ENCODE measurements at regions of chr1 and their contacts with region 1.

Region 1: DNA sequence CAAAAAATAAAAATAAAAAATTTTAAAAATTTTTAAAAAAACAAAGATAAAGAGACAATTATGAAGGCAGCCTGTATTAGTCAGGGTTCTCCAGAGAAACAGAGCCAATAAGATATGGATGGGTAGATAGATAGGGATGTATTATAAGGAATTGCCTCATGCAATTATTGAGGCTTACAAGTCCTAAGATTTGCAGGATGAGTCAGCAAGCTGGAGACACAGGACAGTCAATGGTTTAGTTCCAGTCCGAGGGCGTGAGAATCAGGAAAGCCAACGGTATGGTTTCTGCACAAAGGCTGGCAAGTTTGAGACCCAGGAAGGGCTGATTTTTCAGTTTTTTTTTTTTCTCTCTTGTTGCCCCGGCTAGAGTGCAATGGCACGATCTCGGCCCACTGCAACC is 24.1 kb upstream of the EIF4G3 start:
- DNase-seq: no peak
- H3K4me3 ChIP-seq: no peak overlapping the region
- H3K4me3 Mint-ChIP-seq: no peak overlapping the region
- H3K27ac ChIP-seq: no peak overlapping the region
- H3K27ac Mint-ChIP-seq: no peak overlapping the region
- H3K4me1 ChIP-seq: no peaks in the 10 kb centered on the region
- H3K4me1 Mint-ChIP-seq: no peaks in the 10 kb centered on the region
- H3K27me3 ChIP-seq: no peaks in the 10 kb centered on the region
- H3K27me3 Mint-ChIP-seq: peaks cover 0 to 8% (median 8%) of the 10 kb centered on the region in 3 donors
- CTCF ChIP-seq: no peak

Region 2: DNA sequence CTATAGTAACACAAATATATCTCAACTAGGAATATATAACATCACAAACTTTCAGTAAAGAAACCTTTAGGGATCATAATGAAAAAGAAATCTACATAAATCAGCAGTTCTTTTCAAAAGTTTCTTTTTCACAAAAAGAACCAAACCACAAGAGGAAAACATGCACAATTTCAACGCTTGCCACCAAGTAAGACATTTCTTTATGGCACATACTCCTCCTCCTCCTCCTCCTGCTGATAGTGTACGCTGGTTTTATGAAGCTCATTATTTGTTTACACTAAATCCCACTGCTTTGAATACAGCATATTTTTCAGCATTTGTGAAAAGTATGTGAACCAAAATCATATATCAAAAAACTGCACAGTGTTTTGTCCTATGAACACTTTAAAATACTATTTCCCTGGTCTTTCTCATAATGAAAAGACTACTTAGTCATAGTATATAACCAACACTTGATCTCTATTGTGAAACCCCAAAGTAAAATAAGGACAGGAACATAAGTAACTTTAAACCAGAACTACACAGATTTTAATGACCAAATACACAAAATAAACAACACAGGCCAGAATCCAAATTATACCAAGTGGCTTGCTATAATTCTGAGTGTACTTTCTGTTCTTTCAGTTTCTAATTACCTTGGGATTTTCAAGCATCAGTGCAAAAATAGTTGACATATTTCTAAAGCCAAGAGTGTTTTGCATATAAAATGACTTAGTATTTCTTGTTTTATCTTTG is 208.3 kb before region 1 on chr1:
- intact Hi-C with region 1: loop called in 1 of 2 experiments (anchors 5 kb)
- DNase-seq: peak; percentile 10 to 23 (median 12)
- H3K4me3 ChIP-seq: no peak overlapping the region
- H3K4me3 Mint-ChIP-seq: no peak overlapping the region
- H3K27ac ChIP-seq: peak overlapping the region in 1 of 2 donors; percentile 28
- H3K27ac Mint-ChIP-seq: peak overlapping the region; percentile 27 to 84 (median 65)
- H3K4me1 ChIP-seq: peaks cover 10 to 16% of the 10 kb centered on the region in 2 donors
- H3K4me1 Mint-ChIP-seq: peaks cover 22% of the 10 kb centered on the region
- H3K27me3 ChIP-seq: no peaks in the 10 kb centered on the region
- H3K27me3 Mint-ChIP-seq: no peaks in the 10 kb centered on the region
- CTCF ChIP-seq: no peak

Region 3: DNA sequence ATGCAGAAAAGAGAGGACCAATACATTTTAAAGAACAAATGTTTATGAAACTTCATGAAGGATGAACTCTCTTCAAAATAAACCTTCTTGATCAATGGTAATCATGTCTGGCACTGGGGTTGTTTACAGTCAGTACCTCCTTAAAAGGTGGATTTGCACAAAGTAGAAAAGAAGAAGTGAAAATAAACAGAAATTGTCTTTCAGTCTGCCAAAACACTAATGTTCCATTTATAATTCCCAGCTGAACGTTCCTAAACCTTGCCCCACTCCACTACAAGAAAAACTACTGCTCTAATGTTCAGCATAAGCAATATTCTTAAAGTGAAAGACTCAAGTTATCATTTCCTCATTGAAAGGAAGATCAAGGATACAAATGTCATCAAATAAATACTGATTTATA is 110.3 kb before region 1 on chr1:
- intact Hi-C with region 1: no loop called
- DNase-seq: peak in 2 of 3 donors; percentile 13 to 21
- H3K4me3 ChIP-seq: peak overlapping the region in 1 of 3 experiments; percentile 0
- H3K4me3 Mint-ChIP-seq: peak overlapping the region in 1 of 2 donors; percentile 73
- H3K27ac ChIP-seq: peak overlapping the region in 1 of 2 donors; percentile 72
- H3K27ac Mint-ChIP-seq: peak overlapping the region; percentile 92 to 99 (median 95)
- H3K4me1 ChIP-seq: peaks cover 25 to 32% of the 10 kb centered on the region in 2 donors
- H3K4me1 Mint-ChIP-seq: peaks cover 33% of the 10 kb centered on the region
- H3K27me3 ChIP-seq: no peaks in the 10 kb centered on the region
- H3K27me3 Mint-ChIP-seq: no peaks in the 10 kb centered on the region
- CTCF ChIP-seq: no peak

Region 4: DNA sequence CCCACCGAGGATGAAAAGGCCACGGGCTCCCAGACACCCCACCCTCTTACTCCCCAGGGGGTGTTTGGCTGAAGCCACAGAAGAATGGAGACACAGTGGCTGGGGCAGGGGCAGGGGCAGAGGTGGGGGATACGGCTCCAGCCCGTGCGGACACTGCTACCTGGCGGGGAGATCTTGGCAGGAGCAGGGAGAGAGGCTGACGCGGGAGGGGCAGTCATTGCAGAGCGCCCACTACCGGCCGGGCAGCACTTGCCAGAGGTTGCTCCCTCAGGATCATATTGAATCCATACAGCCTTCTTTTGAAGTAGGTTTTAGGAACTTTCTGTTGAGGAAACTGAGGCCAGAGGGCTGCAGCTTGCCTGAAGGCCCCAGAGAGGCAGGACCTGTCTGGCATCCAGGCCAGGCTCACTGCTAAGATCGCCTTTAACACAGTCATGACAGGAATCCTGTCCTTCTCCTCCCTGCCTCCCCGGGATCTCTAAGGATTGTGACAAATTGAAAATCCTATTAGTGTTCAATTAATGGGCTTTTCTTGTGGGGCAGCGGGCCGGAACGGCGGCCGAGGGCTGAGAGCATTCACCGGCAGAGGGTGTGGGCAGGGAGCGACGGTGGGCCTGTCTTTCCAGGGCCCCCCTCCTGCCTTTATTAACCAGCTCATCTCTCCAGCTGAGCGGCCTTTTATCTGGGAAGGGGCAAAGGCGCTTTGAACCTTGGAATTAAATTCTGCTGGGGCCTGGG is 1007.6 kb after region 1 on chr1:
- intact Hi-C with region 1: no loop called
- DNase-seq: no peak
- H3K4me3 ChIP-seq: no peak overlapping the region
- H3K4me3 Mint-ChIP-seq: peak overlapping the region in 1 of 2 donors; percentile 2
- H3K27ac ChIP-seq: no peak overlapping the region
- H3K27ac Mint-ChIP-seq: no peak overlapping the region
- H3K4me1 ChIP-seq: no peaks in the 10 kb centered on the region
- H3K4me1 Mint-ChIP-seq: no peaks in the 10 kb centered on the region
- H3K27me3 ChIP-seq: peaks cover 15 to 55% of the 10 kb centered on the region in 2 donors
- H3K27me3 Mint-ChIP-seq: peaks cover 38 to 73% (median 50%) of the 10 kb centered on the region in 3 donors
- CTCF ChIP-seq: no peak